T-cell (primary cell): ENCODE measurements at regions of chr1 and their contacts with region 1.

Region 1: DNA sequence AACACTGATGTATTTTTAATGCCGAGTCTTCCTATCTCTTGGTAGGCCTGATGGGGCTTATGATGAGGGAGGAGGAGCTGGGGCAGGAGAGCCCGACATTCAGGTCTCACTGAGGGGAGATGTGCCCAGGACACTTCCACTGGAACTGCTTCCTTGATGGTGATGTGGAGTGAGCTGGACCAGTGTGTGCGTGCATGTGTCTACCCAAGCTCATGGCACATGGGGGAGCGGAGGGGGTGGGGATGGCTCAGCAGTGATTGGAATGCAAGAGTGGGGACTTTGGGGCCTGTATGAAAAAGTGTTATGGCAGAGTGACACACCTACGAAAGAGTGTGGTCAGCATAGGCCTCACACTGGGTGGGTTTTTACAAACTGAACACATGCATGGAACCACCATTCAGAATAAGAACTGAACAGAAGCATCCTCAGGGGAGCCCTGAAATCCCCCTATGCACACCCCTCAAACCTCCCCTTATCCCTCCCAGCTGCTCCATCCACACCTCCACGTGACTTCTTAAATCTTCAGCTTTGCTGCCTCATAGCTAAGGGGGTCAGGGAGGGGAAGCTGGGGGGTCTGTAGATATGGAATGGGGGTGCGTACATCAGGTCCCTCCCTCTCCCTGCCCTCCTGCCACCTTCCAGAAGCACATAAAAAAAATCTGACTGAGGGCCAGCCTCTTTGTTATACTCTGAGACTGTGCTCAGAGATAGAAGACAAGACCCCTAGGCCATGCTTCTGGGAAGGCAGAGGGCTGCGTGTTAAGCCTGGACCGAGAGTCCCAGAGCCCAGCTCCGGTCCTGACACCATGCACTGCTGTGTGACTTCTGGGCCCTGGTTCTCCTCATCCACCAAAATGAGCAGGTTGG is 11.6 kb downstream of the IL6R start:
- DNase-seq: no peak
- ATAC-seq: no peak
- H3K4me3 ChIP-seq: no peak overlapping the region
- H3K4me3 Mint-ChIP-seq: no peak overlapping the region
- H3K27ac ChIP-seq: no peak overlapping the region
- H3K27ac Mint-ChIP-seq: peak overlapping the region; percentile 68 to 97
- H3K4me1 ChIP-seq: peaks cover 19 to 76% of the 10 kb centered on the region in 2 experiments
- H3K4me1 Mint-ChIP-seq: peaks cover 74 to 81% (median 75%) of the 10 kb centered on the region in 3 donors
- H3K27me3 ChIP-seq: no peaks in the 10 kb centered on the region
- H3K27me3 Mint-ChIP-seq: no peaks in the 10 kb centered on the region

Region 2: GRCh38 chr1:154710101-154710500 is 293.4 kb after region 1 on chr1:
- CTCF ChIA-PET with region 1: interaction called in 1 of 2 experiments, 10 read pairs
- POLR2A ChIA-PET with region 1: no interaction called
- DNase-seq: no peak
- ATAC-seq: no peak
- H3K4me3 ChIP-seq: no peak overlapping the region
- H3K4me3 Mint-ChIP-seq: no peak overlapping the region
- H3K27ac ChIP-seq: no peak overlapping the region
- H3K27ac Mint-ChIP-seq: no peak overlapping the region
- H3K4me1 ChIP-seq: peaks cover 0 to 6% of the 10 kb centered on the region in 2 experiments
- H3K4me1 Mint-ChIP-seq: no peaks in the 10 kb centered on the region
- H3K27me3 ChIP-seq: peaks cover 0 to 18% of the 10 kb centered on the region in 2 experiments
- H3K27me3 Mint-ChIP-seq: peaks cover 0 to 10% of the 10 kb centered on the region in 2 donors